GM23248 (cell line): ENCODE measurements at regions of chr7 and their contacts with region 1.

Region 1: DNA sequence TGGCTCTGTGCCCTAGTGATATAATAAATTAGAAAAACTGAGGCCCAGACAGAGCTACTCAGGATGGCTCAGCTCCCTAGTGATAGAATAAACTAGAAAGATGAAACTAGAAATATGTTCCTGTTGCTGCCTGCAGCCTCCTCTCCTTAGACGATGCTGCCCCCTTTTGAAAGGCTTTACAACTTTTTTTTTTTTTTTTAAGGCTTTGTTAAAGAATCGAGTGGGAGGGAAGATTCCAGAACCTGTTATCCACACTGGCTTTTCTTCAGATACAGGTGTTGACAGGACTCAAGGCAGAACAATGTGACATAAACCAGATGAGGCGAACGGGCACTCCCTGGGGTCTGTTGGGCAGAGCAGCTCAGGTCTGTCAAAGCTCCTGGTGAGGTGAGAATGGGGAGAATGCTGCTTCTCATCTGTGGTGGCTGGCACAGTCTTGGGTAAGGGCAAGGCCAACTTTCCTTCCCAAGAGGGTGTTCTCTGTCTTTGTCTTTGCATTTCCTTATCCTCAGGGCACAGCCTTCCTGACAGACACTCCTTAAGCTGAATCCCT is 175.1 kb downstream of the COBL start:
- DNase-seq: peak; percentile 77
- H3K4me3 ChIP-seq: no peak overlapping the region
- H3K27ac ChIP-seq: no peak overlapping the region
- H3K4me1 ChIP-seq: no peaks in the 10 kb centered on the region
- H3K27me3 ChIP-seq: peaks cover 23% of the 10 kb centered on the region

Region 2: DNA sequence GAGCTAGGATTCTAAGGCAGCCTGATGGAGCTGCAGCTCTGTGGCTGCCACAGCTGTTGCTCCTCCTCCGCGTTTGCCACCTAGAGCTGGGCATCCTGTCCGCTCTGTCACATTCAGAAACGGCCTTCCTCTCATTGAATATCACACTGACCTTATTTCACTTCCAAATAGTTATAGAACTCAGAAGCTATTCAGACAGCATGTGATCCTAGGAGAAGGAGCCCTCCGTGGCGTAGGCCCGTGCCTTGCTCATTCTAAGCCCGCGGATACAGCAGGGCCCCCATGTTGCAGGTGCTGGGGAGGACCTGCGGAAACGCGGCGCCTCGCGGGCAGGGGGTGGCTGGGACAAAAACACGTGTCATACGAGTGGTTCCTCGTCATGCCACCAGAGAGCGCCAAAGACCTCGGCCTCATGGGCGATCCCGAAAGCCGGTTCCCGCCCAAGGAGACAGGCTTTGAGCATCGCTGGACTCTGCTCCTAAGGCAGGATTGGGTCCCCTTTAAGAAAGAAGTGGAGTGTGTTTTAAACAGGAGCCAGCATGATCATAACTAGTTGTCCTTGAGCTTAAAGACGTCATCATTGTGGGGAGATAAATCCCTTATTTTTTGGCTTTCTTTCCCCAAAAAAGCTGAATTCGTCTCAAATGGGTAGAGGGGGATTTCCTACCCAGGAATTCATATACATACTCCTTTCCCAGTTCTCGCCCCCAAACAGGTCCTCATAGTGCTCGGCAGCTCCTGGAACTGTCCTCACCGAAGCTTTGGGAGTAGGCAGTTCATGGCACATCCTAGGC is 673.5 kb before region 1 on chr7:
- in situ Hi-C with region 1: loop called (anchors 10 kb)
- DNase-seq: peak; percentile 83
- H3K4me3 ChIP-seq: 0 out of 2 replicates have a peak overlapping the region, but pooled peaks have one; percentile 34
- H3K27ac ChIP-seq: no peak overlapping the region
- H3K4me1 ChIP-seq: no peaks in the 10 kb centered on the region
- H3K27me3 ChIP-seq: peaks cover 4% of the 10 kb centered on the region; the same call in 1 of the 2 replicates

Region 3: GRCh38 chr7:50664461-50664922 is 477.0 kb before region 1 on chr7:
- in situ Hi-C with region 1: no loop called
- DNase-seq: peak; percentile 84
- H3K4me3 ChIP-seq: no peak overlapping the region
- H3K27ac ChIP-seq: no peak overlapping the region
- H3K4me1 ChIP-seq: peaks cover 21% of the 10 kb centered on the region
- H3K27me3 ChIP-seq: no peaks in the 10 kb centered on the region

Region 4: GRCh38 chr7:50696810-50697582 is 444.5 kb before region 1 on chr7:
- in situ Hi-C with region 1: loop called (anchors 10 kb)
- DNase-seq: peak; percentile 37
- H3K4me3 ChIP-seq: no peak overlapping the region
- H3K27ac ChIP-seq: no peak overlapping the region
- H3K4me1 ChIP-seq: no peaks in the 10 kb centered on the region
- H3K27me3 ChIP-seq: no peaks in the 10 kb centered on the region

Region 5: DNA sequence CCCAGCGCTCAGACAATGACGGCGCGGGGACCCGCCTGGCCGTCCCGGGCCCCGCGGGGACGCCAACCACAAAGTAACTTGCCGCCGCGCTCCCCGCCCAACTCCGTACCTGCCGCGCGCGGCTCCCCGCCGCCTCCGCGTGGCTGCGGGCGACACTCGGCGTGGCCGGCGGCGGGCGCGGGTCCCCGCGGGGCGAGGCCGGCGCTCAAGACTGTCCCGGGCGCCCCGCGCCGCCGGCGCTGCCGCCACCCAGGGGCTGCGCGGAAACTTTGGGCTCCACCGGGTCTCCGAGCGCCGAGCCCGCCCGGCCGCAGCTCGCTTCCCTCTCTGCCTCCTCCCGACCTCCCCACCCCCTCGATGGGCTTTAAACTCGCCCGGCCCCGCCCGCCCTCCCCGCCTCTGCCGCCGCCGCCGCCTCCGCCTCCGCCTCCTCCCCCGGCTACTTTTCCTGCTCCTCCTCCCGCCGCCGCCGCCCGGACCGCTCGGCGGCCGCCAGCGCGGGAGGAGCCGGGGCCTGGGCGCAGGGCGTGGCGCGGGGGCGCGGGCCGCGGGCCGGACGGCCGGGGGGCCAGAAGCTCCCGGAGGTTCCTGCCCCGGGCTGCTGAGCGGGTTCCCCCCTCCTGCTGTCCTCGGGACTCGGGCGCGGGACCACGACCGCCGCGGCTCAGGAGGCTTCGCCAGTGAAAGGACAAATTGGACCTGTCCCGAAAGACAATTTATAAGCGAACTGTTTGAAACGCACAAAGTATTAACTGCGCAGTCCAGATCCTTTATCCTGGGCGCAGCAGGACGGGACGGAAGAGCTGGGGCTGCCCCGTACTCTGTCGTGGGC is 348.2 kb before region 1 on chr7:
- in situ Hi-C with region 1: loop called (anchors 10 kb)
- DNase-seq: peak; percentile 75
- H3K4me3 ChIP-seq: peak overlapping the region; percentile 83
- H3K27ac ChIP-seq: no peak overlapping the region
- H3K4me1 ChIP-seq: peaks cover 18% of the 10 kb centered on the region
- H3K27me3 ChIP-seq: no peaks in the 10 kb centered on the region